Activated B cell treated with CpG ODN at 0.5 μM for 24 hours (primary cell): ENCODE measurements at regions of chr6 and their contacts with region 1.

Region 1: GRCh38 chr6:127266178-127266891 is at the start of gene RNF146:
- DNase-seq: no peak
- ATAC-seq: peak; percentile 73
- H3K4me3 Mint-ChIP-seq: peak within 1 kb of the TSS; percentile 93
- H3K27ac Mint-ChIP-seq: peak within 1 kb of the TSS; percentile 98
- H3K4me1 Mint-ChIP-seq: peaks cover 38% of the 10 kb centered on the region
- H3K27me3 Mint-ChIP-seq: no peaks in the 10 kb centered on the region
- CTCF ChIP-seq: no peak
- total RNA-seq, gene RNF146: 32.9 and 35.3 TPM in 2 replicates

Region 2: GRCh38 chr6:125749173-125749864 is 1517.0 kb before region 1 on chr6 and contains the start of gene HEY2:
- CTCF ChIA-PET with region 1: no interaction called
- POLR2A ChIA-PET with region 1: no interaction called
- intact Hi-C with region 1: loop called (anchors 1 kb)
- DNase-seq: peak; percentile 92
- ATAC-seq: peak; percentile 91
- H3K4me3 Mint-ChIP-seq: peak within 1 kb of the TSS; percentile 81
- H3K27ac Mint-ChIP-seq: peak within 1 kb of the TSS; percentile 61
- H3K4me1 Mint-ChIP-seq: peaks cover 40% of the 10 kb centered on the region
- H3K27me3 Mint-ChIP-seq: peaks cover 46% of the 10 kb centered on the region
- CTCF ChIP-seq: no peak
- total RNA-seq, gene HEY2: not detected in 2 replicates

Region 3: GRCh38 chr6:125995972-125996580 is 1270.3 kb before region 1 on chr6:
- CTCF ChIA-PET with region 1: no interaction called
- POLR2A ChIA-PET with region 1: no interaction called
- intact Hi-C with region 1: loop called (anchors 1 kb)
- DNase-seq: peak; percentile 50
- ATAC-seq: peak; percentile 100
- H3K4me3 Mint-ChIP-seq: peak overlapping the region; percentile 76
- H3K27ac Mint-ChIP-seq: no peak overlapping the region
- H3K4me1 Mint-ChIP-seq: peaks cover 8% of the 10 kb centered on the region
- H3K27me3 Mint-ChIP-seq: no peaks in the 10 kb centered on the region
- CTCF ChIP-seq: peak; percentile 90

Region 4: GRCh38 chr6:127120787-127121636 is 145.3 kb before region 1 on chr6:
- CTCF ChIA-PET with region 1: no interaction called
- POLR2A ChIA-PET with region 1: no interaction called
- intact Hi-C with region 1: loop called (anchors 2 kb)
- DNase-seq: peak; percentile 33
- ATAC-seq: peak; percentile 78
- H3K4me3 Mint-ChIP-seq: peak overlapping the region; percentile 39
- H3K27ac Mint-ChIP-seq: no peak overlapping the region
- H3K4me1 Mint-ChIP-seq: peaks cover 35% of the 10 kb centered on the region
- H3K27me3 Mint-ChIP-seq: peaks cover 48% of the 10 kb centered on the region
- CTCF ChIP-seq: no peak

Region 5: GRCh38 chr6:127291495-127291894 is 25.2 kb after region 1 on chr6:
- CTCF ChIA-PET with region 1: interaction called, 11 read pairs
- POLR2A ChIA-PET with region 1: interaction called, 18 read pairs
- intact Hi-C with region 1: loop called (anchors 2 kb)
- DNase-seq: no peak
- ATAC-seq: peak; percentile 84
- H3K4me3 Mint-ChIP-seq: peak overlapping the region; percentile 64
- H3K27ac Mint-ChIP-seq: peak overlapping the region; percentile 79
- H3K4me1 Mint-ChIP-seq: peaks cover 25% of the 10 kb centered on the region
- H3K27me3 Mint-ChIP-seq: no peaks in the 10 kb centered on the region
- CTCF ChIP-seq: no peak

Region 6: DNA sequence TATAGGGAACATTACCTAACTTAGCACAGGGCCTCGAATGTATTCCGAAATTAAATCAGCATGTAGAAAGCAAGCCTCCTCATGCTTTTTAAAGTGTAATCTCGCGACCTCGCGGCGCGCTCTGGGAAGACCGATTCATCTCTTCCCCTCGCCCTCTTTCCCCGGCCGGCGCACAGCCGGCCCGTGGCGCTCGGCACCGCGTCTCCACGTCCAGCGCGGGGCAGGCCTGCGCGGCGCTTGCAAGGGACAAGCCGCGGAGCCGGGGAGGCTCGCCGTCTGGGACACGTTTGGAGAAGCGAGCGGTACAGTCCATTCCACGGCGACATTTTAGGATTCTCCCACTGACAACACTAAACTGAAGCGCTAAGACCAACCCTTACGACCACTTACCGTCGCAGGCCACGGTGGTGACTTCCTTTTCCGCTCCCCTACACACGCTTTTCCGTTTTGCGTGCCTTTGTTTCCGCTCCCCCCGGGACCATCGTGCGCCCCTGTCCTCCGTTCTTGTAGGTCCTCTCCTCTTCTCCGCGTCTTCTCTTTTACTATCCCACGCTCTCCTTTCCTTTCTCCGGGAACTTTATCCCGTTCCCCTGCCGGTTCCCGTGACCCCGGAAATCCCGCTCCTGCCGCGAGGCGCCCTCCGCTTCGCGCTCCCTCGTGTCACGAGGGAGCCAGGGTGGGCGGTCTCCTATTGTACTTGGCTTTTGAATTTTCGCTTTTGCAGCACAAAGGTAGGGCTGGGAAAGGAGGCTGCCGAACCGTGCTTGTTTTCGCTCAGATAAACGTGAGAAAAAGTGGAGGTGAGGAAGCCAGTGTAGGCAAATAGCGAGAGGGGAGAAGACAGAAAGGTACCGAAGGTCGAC is 76.8 kb after region 1 on chr6 and contains the start of gene ECHDC1:
- CTCF ChIA-PET with region 1: interaction called, 8 read pairs
- POLR2A ChIA-PET with region 1: interaction called, 17 read pairs
- intact Hi-C with region 1: loop called (anchors 1 kb)
- DNase-seq: peak; percentile 57
- ATAC-seq: peak; percentile 69
- H3K4me3 Mint-ChIP-seq: no peak within 1 kb of the TSS
- H3K27ac Mint-ChIP-seq: no peak within 1 kb of the TSS
- H3K4me1 Mint-ChIP-seq: peaks cover 12% of the 10 kb centered on the region
- H3K27me3 Mint-ChIP-seq: no peaks in the 10 kb centered on the region
- CTCF ChIP-seq: no peak
- total RNA-seq, gene ECHDC1: 57.3 and 59.7 TPM in 2 replicates